ENCODE measurements at regions of chr14 and their contacts with region 1.

Region 1: GRCh38 chr14:73477618-73478266 is 13.0 kb upstream of the RIOX1 start:
- DNase-seq: peak; percentile 90
- ATAC-seq: peak; percentile 88
- H3K4me3 ChIP-seq: no peak overlapping the region
- H3K27ac ChIP-seq: peak overlapping the region; percentile 68
- H3K4me1 ChIP-seq: peaks cover 17% of the 10 kb centered on the region
- H3K27me3 ChIP-seq: no peaks in the 10 kb centered on the region
- CTCF ChIP-seq: no peak
- EP300 ChIP-seq: peak; percentile 73 to 89; a peak in 2 of 4 replicates
- POLR2A ChIP-seq: no peak
- RAD21 ChIP-seq: peak; percentile 24; the same call in 1 of the 2 replicates

Region 2: DNA sequence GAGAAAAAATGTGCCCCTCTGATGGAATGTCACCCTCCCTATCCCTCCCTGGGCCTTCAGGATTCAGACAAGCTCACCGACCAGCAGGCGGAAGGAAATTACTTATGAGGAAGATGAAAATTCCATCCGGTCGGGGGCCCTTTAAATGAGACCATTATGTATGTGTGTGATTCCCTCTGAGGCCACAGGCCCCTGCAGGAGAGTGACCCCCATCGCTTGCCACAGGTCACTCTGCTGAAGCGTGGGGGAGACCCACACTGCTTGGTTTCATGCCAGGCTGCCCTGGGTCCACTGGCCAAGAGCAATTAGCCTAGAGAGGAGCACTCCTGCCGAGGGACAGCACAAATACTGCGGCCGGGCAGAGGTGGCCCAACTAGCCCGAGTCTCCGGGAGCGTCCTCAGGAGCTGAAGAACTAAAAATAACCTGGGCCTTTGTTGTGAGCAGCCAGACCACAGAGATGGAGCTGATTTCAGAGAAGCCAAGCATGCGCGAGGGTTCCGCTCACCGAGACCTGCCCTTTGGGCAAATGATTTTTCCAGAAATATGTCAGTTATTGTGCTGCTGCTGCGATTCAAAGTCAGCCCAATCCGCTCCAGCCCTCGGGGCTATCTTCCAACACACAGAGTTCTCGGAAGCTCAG is 860.2 kb before region 1 on chr14:
- CTCF ChIA-PET with region 1: no interaction called
- POLR2A ChIA-PET with region 1: no interaction called
- RAD21 ChIA-PET with region 1: no interaction called
- SMC1A ChIA-PET with region 1: no interaction called
- in situ Hi-C with region 1: no loop called
- intact Hi-C with region 1: no loop called
- DNase-seq: no peak
- ATAC-seq: no peak
- H3K4me3 ChIP-seq: no peak overlapping the region
- H3K27ac ChIP-seq: no peak overlapping the region
- H3K4me1 ChIP-seq: no peaks in the 10 kb centered on the region
- H3K27me3 ChIP-seq: no peaks in the 10 kb centered on the region; a peak in 1 of 4 replicates
- CTCF ChIP-seq: no peak
- EP300 ChIP-seq: no peak
- POLR2A ChIP-seq: no peak
- RAD21 ChIP-seq: no peak

Region 3: DNA sequence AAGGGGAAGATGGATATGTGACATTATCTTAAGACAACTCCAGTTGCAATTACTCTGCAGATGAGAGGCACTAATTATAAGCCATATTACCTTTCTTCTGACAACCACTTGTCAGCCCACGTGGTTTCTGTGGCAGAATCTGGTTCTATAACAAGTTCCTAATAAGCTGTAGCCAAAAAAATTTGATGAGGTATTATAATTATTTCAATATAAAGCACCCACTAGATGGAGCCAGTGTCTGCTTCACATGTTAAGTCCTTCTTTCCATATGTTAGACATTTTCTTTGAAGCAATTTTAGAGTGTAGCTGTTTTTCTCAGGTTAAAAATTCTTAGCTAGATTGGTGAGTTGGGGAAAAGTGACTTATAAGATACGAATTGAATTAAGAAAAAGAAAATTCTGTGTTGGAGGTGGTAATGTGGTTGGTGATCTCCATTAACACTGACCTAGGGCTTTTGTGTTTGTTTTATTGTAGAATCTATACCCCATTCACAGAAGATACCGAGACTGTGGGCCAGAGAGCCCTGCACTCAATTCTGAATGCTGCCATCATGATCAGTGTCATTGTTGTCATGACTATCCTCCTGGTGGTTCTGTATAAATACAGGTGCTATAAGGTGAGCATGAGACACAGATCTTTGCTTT is 304.5 kb before region 1 on chr14:
- CTCF ChIA-PET with region 1: interaction called, 106 read pairs
- POLR2A ChIA-PET with region 1: no interaction called
- RAD21 ChIA-PET with region 1: interaction called, 48 read pairs
- SMC1A ChIA-PET with region 1: interaction called, 32 read pairs
- in situ Hi-C with region 1: loop called (anchors 5 kb)
- intact Hi-C with region 1: loop called (anchors 1 kb)
- DNase-seq: no peak
- ATAC-seq: peak; percentile 60
- H3K4me3 ChIP-seq: no peak overlapping the region
- H3K27ac ChIP-seq: no peak overlapping the region
- H3K4me1 ChIP-seq: no peaks in the 10 kb centered on the region
- H3K27me3 ChIP-seq: no peaks in the 10 kb centered on the region
- CTCF ChIP-seq: peak; percentile 19 to 62 (median 36); a peak in 4 of 6 replicates
- EP300 ChIP-seq: no peak
- POLR2A ChIP-seq: no peak
- RAD21 ChIP-seq: peak; percentile 68

Region 4: DNA sequence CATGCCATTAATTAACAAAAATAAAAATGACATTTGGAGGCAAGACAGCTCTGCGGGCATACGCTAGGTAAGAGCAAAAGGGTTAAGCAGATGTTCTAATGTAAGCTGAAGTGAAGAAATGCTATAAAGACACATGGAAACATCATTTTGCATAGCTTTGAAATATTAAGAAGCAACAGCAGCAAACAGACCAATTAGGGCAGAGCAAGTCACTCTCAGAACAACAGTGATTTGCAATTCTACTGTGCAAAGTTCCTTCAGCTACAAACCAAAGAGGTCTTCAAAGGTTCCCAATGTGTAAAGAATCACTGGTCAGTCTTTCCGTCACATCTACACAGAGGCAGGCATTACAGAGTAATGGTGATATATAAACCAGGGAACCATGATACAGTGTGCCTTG is 172.2 kb before region 1 on chr14:
- CTCF ChIA-PET with region 1: interaction called, 12 read pairs
- POLR2A ChIA-PET with region 1: no interaction called
- RAD21 ChIA-PET with region 1: interaction called, 13 read pairs
- SMC1A ChIA-PET with region 1: interaction called, 9 read pairs
- in situ Hi-C with region 1: no loop called
- intact Hi-C with region 1: no loop called
- DNase-seq: no peak
- ATAC-seq: no peak
- H3K4me3 ChIP-seq: no peak overlapping the region
- H3K27ac ChIP-seq: no peak overlapping the region
- H3K4me1 ChIP-seq: peaks cover 19% of the 10 kb centered on the region
- H3K27me3 ChIP-seq: no peaks in the 10 kb centered on the region
- CTCF ChIP-seq: no peak
- EP300 ChIP-seq: no peak
- POLR2A ChIP-seq: no peak
- RAD21 ChIP-seq: no peak

Region 5: DNA sequence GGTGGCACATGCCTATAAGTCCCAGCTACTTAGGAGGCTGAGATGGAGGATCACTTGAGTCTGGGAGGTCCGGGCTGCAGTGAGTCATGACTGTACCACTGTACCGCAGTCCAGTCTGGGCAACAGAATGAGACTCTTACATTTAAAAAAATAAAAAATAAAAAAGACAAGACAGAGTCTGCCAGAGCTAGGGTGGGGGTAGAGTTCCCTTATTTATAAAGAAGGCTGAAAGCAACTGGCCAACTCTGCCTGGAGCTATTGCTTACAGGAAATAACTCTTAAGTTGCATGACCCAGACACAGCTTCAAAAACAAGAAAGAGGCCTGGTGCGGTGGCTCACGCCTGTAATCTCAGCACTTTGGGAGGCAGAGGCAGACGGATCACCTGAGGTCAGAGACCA is 50.9 kb before region 1 on chr14:
- CTCF ChIA-PET with region 1: no interaction called
- POLR2A ChIA-PET with region 1: no interaction called
- RAD21 ChIA-PET with region 1: no interaction called
- SMC1A ChIA-PET with region 1: no interaction called
- in situ Hi-C with region 1: no loop called
- intact Hi-C with region 1: no loop called
- DNase-seq: no peak
- ATAC-seq: peak; percentile 31; the same call in 2 of the 3 replicates
- H3K4me3 ChIP-seq: no peak overlapping the region
- H3K27ac ChIP-seq: no peak overlapping the region
- H3K4me1 ChIP-seq: peaks cover 10% of the 10 kb centered on the region
- H3K27me3 ChIP-seq: no peaks in the 10 kb centered on the region
- CTCF ChIP-seq: no peak
- EP300 ChIP-seq: no peak
- POLR2A ChIP-seq: no peak
- RAD21 ChIP-seq: no peak

Region 6: DNA sequence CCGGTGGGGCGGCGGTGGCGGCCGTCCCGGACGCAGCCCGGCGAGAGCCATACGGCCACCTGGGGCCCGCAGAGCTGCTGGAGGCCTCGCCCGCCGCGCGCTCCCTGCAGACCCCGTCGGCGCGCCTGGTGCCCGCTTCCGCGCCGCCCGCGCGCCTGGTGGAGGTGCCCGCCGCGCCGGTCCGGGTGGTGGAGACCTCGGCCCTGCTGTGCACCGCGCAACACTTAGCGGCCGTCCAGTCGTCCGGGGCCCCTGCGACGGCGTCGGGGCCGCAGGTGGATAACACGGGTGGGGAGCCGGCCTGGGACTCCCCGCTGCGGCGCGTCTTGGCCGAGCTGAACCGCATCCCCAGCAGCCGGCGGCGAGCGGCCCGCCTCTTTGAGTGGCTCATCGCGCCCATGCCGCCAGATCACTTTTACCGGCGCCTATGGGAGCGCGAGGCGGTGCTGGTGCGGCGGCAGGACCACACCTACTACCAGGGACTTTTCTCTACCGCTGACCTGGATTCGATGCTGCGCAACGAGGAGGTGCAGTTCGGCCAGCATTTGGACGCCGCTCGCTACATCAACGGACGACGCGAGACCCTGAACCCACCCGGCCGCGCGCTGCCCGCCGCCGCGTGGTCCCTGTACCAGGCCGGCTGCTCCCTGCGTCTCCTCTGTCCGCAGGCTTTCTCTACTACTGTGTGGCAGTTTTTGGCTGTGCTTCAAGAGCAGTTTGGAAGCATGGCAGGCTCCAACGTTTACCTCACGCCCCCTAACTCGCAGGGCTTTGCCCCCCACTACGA is 13.7 kb after region 1 on chr14:
- CTCF ChIA-PET with region 1: interaction called, 7 read pairs
- POLR2A ChIA-PET with region 1: interaction called, 17 read pairs
- RAD21 ChIA-PET with region 1: interaction called, 14 read pairs
- SMC1A ChIA-PET with region 1: interaction called, 12 read pairs
- in situ Hi-C with region 1: no loop called
- intact Hi-C with region 1: no loop called
- DNase-seq: no peak
- ATAC-seq: peak; percentile 87
- H3K4me3 ChIP-seq: peak overlapping the region; percentile 80
- H3K27ac ChIP-seq: peak overlapping the region; percentile 72
- H3K4me1 ChIP-seq: peaks cover 17% of the 10 kb centered on the region
- H3K27me3 ChIP-seq: no peaks in the 10 kb centered on the region
- CTCF ChIP-seq: no peak
- EP300 ChIP-seq: no peak
- POLR2A ChIP-seq: no peak
- RAD21 ChIP-seq: no peak

Region 7: DNA sequence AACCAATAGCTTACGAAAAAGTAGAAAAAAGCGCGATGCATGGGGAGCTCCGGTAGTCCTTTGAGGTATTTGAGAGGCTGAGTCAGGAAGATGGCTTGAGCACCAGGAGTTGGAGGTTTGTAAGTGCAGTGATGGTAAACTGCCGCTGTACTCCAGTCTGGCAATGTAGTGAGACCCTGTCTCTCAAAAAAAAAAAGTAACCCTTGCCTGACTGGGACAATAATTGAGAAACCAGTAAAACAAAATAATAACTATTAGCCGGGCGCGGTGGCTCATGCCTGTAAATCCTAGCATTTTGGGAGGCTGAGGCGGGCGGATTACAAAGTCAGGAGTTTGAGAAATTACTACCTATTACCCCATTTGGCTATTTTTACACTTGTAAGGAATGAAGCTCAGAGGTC is 90.6 kb after region 1 on chr14:
- CTCF ChIA-PET with region 1: interaction called, 11 read pairs
- POLR2A ChIA-PET with region 1: interaction called, 3 read pairs
- RAD21 ChIA-PET with region 1: interaction called, 7 read pairs
- SMC1A ChIA-PET with region 1: interaction called, 6 read pairs
- in situ Hi-C with region 1: no loop called
- intact Hi-C with region 1: no loop called
- DNase-seq: no peak
- ATAC-seq: no peak
- H3K4me3 ChIP-seq: peak overlapping the region; percentile 60
- H3K27ac ChIP-seq: peak overlapping the region; percentile 68
- H3K4me1 ChIP-seq: peaks cover 7% of the 10 kb centered on the region
- H3K27me3 ChIP-seq: no peaks in the 10 kb centered on the region
- CTCF ChIP-seq: no peak
- EP300 ChIP-seq: no peak
- POLR2A ChIP-seq: no peak
- RAD21 ChIP-seq: no peak

Region 8: DNA sequence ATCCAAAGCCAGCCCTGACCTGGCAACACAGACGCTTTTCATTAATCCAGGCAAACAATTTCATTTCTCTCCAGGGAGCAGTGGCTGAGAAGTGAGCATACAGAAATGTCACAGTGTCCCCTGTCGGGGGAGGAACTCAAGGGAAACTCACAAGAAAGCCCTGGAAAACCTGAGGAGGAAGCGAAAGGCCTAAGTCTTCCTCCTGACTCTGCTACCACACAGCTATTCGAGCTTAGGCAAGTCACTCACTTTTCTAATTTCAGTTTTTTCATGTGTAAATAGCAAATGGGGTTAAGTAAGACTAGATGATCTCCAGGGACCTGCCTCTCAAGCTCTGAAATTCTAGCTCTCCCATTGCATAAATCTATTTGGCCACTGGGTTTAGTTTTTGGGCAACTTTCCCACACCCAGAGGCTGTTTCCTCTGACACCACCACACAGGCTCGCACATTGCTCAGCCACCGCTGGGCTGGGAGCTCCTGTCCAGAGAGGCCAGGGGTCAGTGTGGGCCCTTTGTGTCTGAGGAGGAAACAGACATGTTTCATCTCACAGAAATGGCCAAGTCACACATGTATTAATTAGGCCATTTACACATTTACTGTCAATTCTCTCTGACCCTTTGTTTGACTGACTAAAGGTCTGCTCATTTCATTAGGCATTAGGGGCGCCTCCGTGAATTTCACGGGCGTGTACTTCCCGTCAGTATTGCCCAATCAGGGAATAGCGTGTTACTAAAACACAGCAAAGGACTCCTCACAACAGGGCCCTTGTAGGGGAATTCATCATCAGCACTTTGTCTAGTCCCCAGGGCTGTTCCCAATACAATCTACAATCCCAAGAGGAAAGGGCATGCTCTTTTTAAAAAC is 246.3 kb after region 1 on chr14:
- CTCF ChIA-PET with region 1: no interaction called
- POLR2A ChIA-PET with region 1: no interaction called
- RAD21 ChIA-PET with region 1: no interaction called
- SMC1A ChIA-PET with region 1: no interaction called
- in situ Hi-C with region 1: no loop called
- intact Hi-C with region 1: no loop called
- DNase-seq: no peak
- ATAC-seq: no peak
- H3K4me3 ChIP-seq: no peak overlapping the region
- H3K27ac ChIP-seq: no peak overlapping the region
- H3K4me1 ChIP-seq: no peaks in the 10 kb centered on the region
- H3K27me3 ChIP-seq: no peaks in the 10 kb centered on the region
- CTCF ChIP-seq: peak in 1 of 3 experiments; percentile 36; a peak in 2 of 6 replicates
- EP300 ChIP-seq: no peak
- POLR2A ChIP-seq: no peak
- RAD21 ChIP-seq: no peak

Measured in GM12878 (cell line).